CD4-positive, alpha-beta T cell (primary cell): ENCODE measurements at regions of chr12 and their contacts with region 1.

Region 1: DNA sequence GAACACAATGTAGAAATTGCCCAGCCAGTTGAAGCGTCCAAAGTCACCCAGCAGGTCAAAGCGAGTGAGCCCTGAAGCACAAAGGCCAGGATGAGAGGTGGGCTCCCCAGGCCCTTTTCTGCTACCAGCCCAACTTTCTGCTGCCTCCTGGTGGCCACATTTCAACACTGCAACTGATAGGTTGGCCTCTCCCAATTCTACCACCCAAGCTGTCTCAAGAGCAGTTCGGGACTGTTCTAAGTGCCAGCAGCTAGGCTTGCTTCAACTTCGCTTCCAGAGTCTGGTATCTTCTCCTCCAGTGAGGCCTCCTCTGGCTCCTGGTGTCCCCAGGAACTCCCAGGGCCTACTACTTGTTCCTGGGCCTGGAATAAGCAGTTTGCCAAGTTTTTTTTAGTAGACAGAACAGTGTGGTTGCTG is 3.4 kb upstream of the DHH start:
- DNase-seq: peak; percentile 36 to 80 (median 58)
- ATAC-seq: peak; percentile 73
- H3K4me3 ChIP-seq: no peak overlapping the region
- H3K4me3 Mint-ChIP-seq: no peak overlapping the region
- H3K27ac ChIP-seq: no peak overlapping the region
- H3K27ac Mint-ChIP-seq: no peak overlapping the region
- H3K4me1 ChIP-seq: peaks cover 15% of the 10 kb centered on the region
- H3K4me1 Mint-ChIP-seq: peaks cover 25% of the 10 kb centered on the region
- H3K27me3 ChIP-seq: peaks cover 16 to 20% of the 10 kb centered on the region in 2 experiments
- H3K27me3 Mint-ChIP-seq: peaks cover 28% of the 10 kb centered on the region
- CTCF ChIP-seq: peak; percentile 76

Region 2: GRCh38 chr12:49060237-49061156 is 37.5 kb before region 1 on chr12 and contains the start of gene KMT2D:
- CTCF ChIA-PET with region 1: interaction called, 29 read pairs
- POLR2A ChIA-PET with region 1: interaction called, 7 read pairs
- intact Hi-C with region 1: loop called (anchors 1 to 2 kb)
- DNase-seq: peak; percentile 78 to 95 (median 86)
- ATAC-seq: peak; percentile 68
- H3K4me3 ChIP-seq: peak within 1 kb of the TSS; percentile 96
- H3K4me3 Mint-ChIP-seq: peak within 1 kb of the TSS; percentile 97
- H3K27ac ChIP-seq: peak within 1 kb of the TSS; percentile 90 to 93
- H3K27ac Mint-ChIP-seq: peak within 1 kb of the TSS; percentile 96
- H3K4me1 ChIP-seq: peaks cover 56% of the 10 kb centered on the region
- H3K4me1 Mint-ChIP-seq: peaks cover 55% of the 10 kb centered on the region
- H3K27me3 ChIP-seq: no peaks in the 10 kb centered on the region
- H3K27me3 Mint-ChIP-seq: no peaks in the 10 kb centered on the region
- CTCF ChIP-seq: no peak
- total RNA-seq, gene KMT2D: 107 to 110 TPM

Region 3: GRCh38 chr12:49069507-49070346 is 28.3 kb before region 1 on chr12 and contains the start of gene RHEBL1:
- CTCF ChIA-PET with region 1: interaction called, 29 read pairs
- POLR2A ChIA-PET with region 1: interaction called, 6 read pairs
- intact Hi-C with region 1: loop called (anchors 1 to 2 kb)
- DNase-seq: peak; percentile 95 to 99 (median 97)
- ATAC-seq: peak; percentile 98
- H3K4me3 ChIP-seq: peak within 1 kb of the TSS; percentile 97
- H3K4me3 Mint-ChIP-seq: peak within 1 kb of the TSS; percentile 97
- H3K27ac ChIP-seq: peak within 1 kb of the TSS; percentile 61 to 76
- H3K27ac Mint-ChIP-seq: peak within 1 kb of the TSS; percentile 92
- H3K4me1 ChIP-seq: peaks cover 14% of the 10 kb centered on the region
- H3K4me1 Mint-ChIP-seq: peaks cover 21% of the 10 kb centered on the region
- H3K27me3 ChIP-seq: no peaks in the 10 kb centered on the region
- H3K27me3 Mint-ChIP-seq: peaks cover 3% of the 10 kb centered on the region
- CTCF ChIP-seq: no peak
- total RNA-seq, gene RHEBL1: 5.1 to 6.0 TPM

Region 4: GRCh38 chr12:49110464-49111155 is 12.6 kb after region 1 on chr12 and contains the start of gene LMBR1L:
- CTCF ChIA-PET with region 1: interaction called, 34 read pairs
- POLR2A ChIA-PET with region 1: interaction called, 41 read pairs
- intact Hi-C with region 1: loop called in 1 of 2 experiments (anchors 2 kb)
- DNase-seq: peak; percentile 92 to 99 (median 95)
- ATAC-seq: peak; percentile 91
- H3K4me3 ChIP-seq: peak within 1 kb of the TSS; percentile 75
- H3K4me3 Mint-ChIP-seq: peak within 1 kb of the TSS; percentile 89
- H3K27ac ChIP-seq: peak within 1 kb of the TSS; percentile 85 to 94
- H3K27ac Mint-ChIP-seq: peak within 1 kb of the TSS; percentile 97
- H3K4me1 ChIP-seq: peaks cover 41% of the 10 kb centered on the region
- H3K4me1 Mint-ChIP-seq: peaks cover 35% of the 10 kb centered on the region
- H3K27me3 ChIP-seq: no peaks in the 10 kb centered on the region
- H3K27me3 Mint-ChIP-seq: no peaks in the 10 kb centered on the region
- CTCF ChIP-seq: peak; percentile 61
- total RNA-seq, gene LMBR1L: 401 to 418 TPM